ENCODE measurements at regions of chr20 and their contacts with region 1.

Region 1: DNA sequence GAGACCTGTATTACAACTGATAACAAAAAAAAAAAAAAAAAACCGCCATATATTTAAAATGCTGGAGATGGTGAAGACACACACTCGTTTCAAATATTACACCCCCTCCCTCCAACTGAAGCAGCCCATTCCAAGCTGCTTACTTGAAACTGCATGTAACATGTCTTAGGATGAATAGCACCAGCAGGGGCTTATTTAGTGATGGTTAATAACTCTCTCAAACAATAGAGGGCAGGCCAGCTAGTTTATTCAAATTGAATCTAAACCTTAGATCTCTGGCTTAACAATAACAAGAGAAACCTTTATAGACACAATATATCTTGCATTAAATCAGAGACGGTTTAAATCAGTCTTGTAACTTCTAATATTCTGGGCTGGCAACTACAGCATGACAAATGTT is 9.3 kb upstream of the JPH2 start:
- DNase-seq: no peak
- H3K4me3 ChIP-seq: no peak overlapping the region
- H3K27ac ChIP-seq: no peak overlapping the region
- H3K4me1 ChIP-seq: peaks cover 8% of the 10 kb centered on the region; the same call in 1 of the 2 replicates
- H3K27me3 ChIP-seq: no peaks in the 10 kb centered on the region
- CTCF ChIP-seq: 0 out of 2 replicates have a peak, but pooled peaks have one; percentile 31

Region 2: GRCh38 chr20:43537921-43538877 is 658.1 kb before region 1 on chr20:
- CTCF ChIA-PET with region 1: no interaction called
- POLR2A ChIA-PET with region 1: no interaction called
- intact Hi-C with region 1: loop called (anchors 10 kb)
- DNase-seq: peak; percentile 46 to 65
- H3K4me3 ChIP-seq: no peak overlapping the region
- H3K27ac ChIP-seq: no peak overlapping the region
- H3K4me1 ChIP-seq: peaks cover 13% of the 10 kb centered on the region
- H3K27me3 ChIP-seq: no peaks in the 10 kb centered on the region
- CTCF ChIP-seq: peak; percentile 98

Region 3: DNA sequence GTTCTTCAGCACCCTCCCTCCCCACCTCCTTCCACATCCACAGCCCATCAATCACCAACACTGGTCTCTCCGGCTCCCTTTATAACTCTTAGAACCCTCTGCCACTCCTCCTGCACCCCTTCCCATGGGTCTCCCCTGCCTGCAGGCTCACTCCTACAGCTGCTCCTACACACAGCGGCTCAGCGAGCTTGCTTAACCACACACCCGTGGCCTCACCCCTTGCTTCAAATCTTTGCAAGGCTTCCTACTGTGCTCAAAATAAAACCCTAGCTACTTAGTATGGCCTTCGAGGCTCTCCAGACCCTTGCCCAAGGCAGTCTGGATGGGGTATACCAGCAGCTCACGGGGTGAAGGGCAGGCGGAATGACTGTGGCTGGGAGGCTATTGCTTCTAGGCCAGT is 73.0 kb before region 1 on chr20:
- CTCF ChIA-PET with region 1: interaction called, 61 read pairs
- POLR2A ChIA-PET with region 1: interaction called, 37 read pairs
- intact Hi-C with region 1: no loop called
- DNase-seq: no peak
- H3K4me3 ChIP-seq: no peak overlapping the region
- H3K27ac ChIP-seq: no peak overlapping the region
- H3K4me1 ChIP-seq: no peaks in the 10 kb centered on the region
- H3K27me3 ChIP-seq: no peaks in the 10 kb centered on the region
- CTCF ChIP-seq: no peak

Region 4: DNA sequence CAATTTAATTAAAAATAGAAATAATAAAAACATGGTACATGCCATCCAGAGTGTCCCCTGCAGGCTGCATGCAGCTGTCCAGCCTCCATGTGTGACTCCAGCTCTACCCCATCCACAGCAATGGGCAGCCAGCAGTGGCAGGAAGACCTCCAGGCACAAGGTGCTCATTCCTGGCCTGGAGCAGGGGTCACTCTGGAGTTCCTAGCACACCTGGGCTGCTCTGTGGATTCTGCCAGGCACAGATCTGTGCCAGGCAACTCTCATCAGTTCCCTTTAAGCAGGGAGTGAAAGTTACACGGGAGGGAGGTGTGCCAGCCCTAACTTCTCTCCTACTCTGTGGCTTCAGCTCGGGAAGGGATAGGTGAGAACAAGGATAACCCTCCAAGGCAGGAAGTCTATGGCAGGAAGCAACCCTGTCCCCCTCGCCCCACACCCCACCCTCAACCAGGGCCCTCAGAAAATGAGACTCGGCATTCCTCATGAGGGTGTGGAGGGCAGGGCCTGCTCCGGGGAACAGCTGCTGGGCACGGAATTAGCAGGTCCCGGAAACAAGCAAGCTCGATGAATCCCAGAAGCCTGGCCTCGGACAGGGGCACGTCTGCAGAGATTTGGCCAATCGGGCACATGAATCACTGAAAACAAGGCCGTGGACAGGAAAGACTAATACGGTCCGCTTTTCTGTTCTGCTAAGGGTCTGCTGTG is 19.3 kb before region 1 on chr20:
- CTCF ChIA-PET with region 1: interaction called, 11 read pairs
- POLR2A ChIA-PET with region 1: interaction called, 7 read pairs
- intact Hi-C with region 1: no loop called
- DNase-seq: peak; percentile 92 to 93
- H3K4me3 ChIP-seq: peak overlapping the region; percentile 41
- H3K27ac ChIP-seq: peak overlapping the region; percentile 99
- H3K4me1 ChIP-seq: peaks cover 84% of the 10 kb centered on the region
- H3K27me3 ChIP-seq: no peaks in the 10 kb centered on the region
- CTCF ChIP-seq: no peak

Region 5: GRCh38 chr20:44765652-44766347 is 569.5 kb after region 1 on chr20:
- CTCF ChIA-PET with region 1: no interaction called
- POLR2A ChIA-PET with region 1: no interaction called
- intact Hi-C with region 1: no loop called
- DNase-seq: peak; percentile 18 to 82
- H3K4me3 ChIP-seq: no peak overlapping the region
- H3K27ac ChIP-seq: no peak overlapping the region
- H3K4me1 ChIP-seq: no peaks in the 10 kb centered on the region; the same call in 1 of the 2 replicates
- H3K27me3 ChIP-seq: peaks cover 94% of the 10 kb centered on the region
- CTCF ChIP-seq: no peak